ENCODE measurements at regions of chr20 and their contacts with region 1.

Region 1: GRCh38 chr20:23200918-23201317 is 114.8 kb upstream of the CD93 start:
- DNase-seq: peak; percentile 77
- ATAC-seq: peak; percentile 92
- H3K4me3 Mint-ChIP-seq: no peak overlapping the region
- H3K27ac Mint-ChIP-seq: no peak overlapping the region
- H3K4me1 Mint-ChIP-seq: peaks cover 20% of the 10 kb centered on the region
- H3K27me3 Mint-ChIP-seq: peaks cover 13% of the 10 kb centered on the region
- CTCF ChIP-seq: peak; percentile 35; the same call in 1 of the 2 replicates

Region 2: DNA sequence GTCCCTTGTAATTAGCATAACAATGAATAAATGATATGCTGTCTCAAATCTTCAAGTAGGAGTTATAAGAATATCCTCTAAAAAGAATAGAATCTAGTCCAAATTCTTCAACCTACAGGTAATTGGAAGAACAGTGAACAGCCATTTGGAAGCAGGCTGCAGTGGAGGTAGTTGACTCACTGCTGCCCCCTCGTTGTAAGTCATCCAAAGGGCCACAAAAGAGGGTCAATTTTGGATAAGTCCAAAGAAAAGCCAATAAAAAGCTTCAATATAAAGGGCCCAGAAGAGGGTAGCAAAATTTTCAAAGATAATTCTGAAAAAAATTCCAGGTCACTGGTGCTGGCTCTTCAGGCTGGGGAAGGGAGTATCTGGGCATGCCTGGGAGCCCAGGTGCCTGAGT is 226.6 kb before region 1 on chr20:
- CTCF ChIA-PET with region 1: interaction called, 14 read pairs
- POLR2A ChIA-PET with region 1: no interaction called
- DNase-seq: peak; percentile 41
- ATAC-seq: peak; percentile 79
- H3K4me3 Mint-ChIP-seq: no peak overlapping the region
- H3K27ac Mint-ChIP-seq: no peak overlapping the region
- H3K4me1 Mint-ChIP-seq: peaks cover 15% of the 10 kb centered on the region
- H3K27me3 Mint-ChIP-seq: peaks cover 9% of the 10 kb centered on the region
- CTCF ChIP-seq: peak; percentile 47

Region 3: GRCh38 chr20:23061734-23062561 is 139.0 kb before region 1 on chr20:
- CTCF ChIA-PET with region 1: interaction called, 23 read pairs
- POLR2A ChIA-PET with region 1: no interaction called
- DNase-seq: peak; percentile 70
- ATAC-seq: peak; percentile 95
- H3K4me3 Mint-ChIP-seq: no peak overlapping the region
- H3K27ac Mint-ChIP-seq: peak overlapping the region; percentile 38
- H3K4me1 Mint-ChIP-seq: peaks cover 32% of the 10 kb centered on the region
- H3K27me3 Mint-ChIP-seq: no peaks in the 10 kb centered on the region
- CTCF ChIP-seq: 0 out of 2 replicates have a peak, but pooled peaks have one; percentile 14

Region 4: GRCh38 chr20:23161968-23162696 is 38.8 kb before region 1 on chr20:
- CTCF ChIA-PET with region 1: interaction called, 11 read pairs
- POLR2A ChIA-PET with region 1: no interaction called
- DNase-seq: no peak
- ATAC-seq: no peak
- H3K4me3 Mint-ChIP-seq: no peak overlapping the region
- H3K27ac Mint-ChIP-seq: no peak overlapping the region
- H3K4me1 Mint-ChIP-seq: peaks cover 23% of the 10 kb centered on the region
- H3K27me3 Mint-ChIP-seq: no peaks in the 10 kb centered on the region
- CTCF ChIP-seq: no peak

Region 5: GRCh38 chr20:23235173-23236027 is 34.5 kb after region 1 on chr20:
- CTCF ChIA-PET with region 1: interaction called, 15 read pairs
- POLR2A ChIA-PET with region 1: no interaction called
- DNase-seq: peak; percentile 78
- ATAC-seq: peak; percentile 100
- H3K4me3 Mint-ChIP-seq: no peak overlapping the region
- H3K27ac Mint-ChIP-seq: no peak overlapping the region
- H3K4me1 Mint-ChIP-seq: no peaks in the 10 kb centered on the region
- H3K27me3 Mint-ChIP-seq: peaks cover 24% of the 10 kb centered on the region
- CTCF ChIP-seq: peak; percentile 87

Region 6: DNA sequence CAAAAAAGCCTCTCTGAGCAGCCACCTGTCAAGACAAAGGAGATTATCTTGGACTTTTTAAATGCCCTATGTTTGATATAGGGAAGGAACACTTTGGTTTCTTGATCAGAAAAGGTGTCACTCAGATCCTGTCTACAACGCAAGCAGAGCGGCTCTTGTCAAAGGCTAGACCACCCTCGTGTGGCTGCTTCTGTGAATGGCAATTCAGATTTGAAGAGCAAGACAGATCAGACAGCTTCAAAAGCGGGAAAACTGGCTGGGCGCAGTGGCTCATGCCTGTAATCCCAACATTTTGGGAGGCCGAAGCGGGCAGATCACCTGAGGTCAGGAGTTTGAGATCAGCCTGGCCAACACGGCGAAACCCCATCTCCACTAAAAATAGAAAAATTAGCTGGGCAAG is 139.6 kb after region 1 on chr20:
- CTCF ChIA-PET with region 1: interaction called, 20 read pairs
- POLR2A ChIA-PET with region 1: no interaction called
- DNase-seq: peak; percentile 74
- ATAC-seq: peak; percentile 92
- H3K4me3 Mint-ChIP-seq: no peak overlapping the region
- H3K27ac Mint-ChIP-seq: no peak overlapping the region
- H3K4me1 Mint-ChIP-seq: peaks cover 13% of the 10 kb centered on the region
- H3K27me3 Mint-ChIP-seq: no peaks in the 10 kb centered on the region; the same call in 1 of the 2 replicates
- CTCF ChIP-seq: 0 out of 2 replicates have a peak, but pooled peaks have one; percentile 21